ENCODE measurements at regions of chr7 and their contacts with region 1.

Region 1: GRCh38 chr7:116809636-116810266 is 52.6 kb upstream of the CAPZA2 start:
- DNase-seq: peak in 1 of 2 experiments; percentile 79
- ATAC-seq: peak; percentile 84 to 86
- H3K4me3 ChIP-seq: no peak overlapping the region
- H3K27ac ChIP-seq: peak overlapping the region; percentile 67 to 68
- H3K4me1 ChIP-seq: peaks cover 77% of the 10 kb centered on the region
- CTCF ChIP-seq: peak; percentile 92
- EP300 ChIP-seq: no peak
- POLR2A ChIP-seq: no peak
- RAD21 ChIP-seq: peak; percentile 93 to 96

Region 2: DNA sequence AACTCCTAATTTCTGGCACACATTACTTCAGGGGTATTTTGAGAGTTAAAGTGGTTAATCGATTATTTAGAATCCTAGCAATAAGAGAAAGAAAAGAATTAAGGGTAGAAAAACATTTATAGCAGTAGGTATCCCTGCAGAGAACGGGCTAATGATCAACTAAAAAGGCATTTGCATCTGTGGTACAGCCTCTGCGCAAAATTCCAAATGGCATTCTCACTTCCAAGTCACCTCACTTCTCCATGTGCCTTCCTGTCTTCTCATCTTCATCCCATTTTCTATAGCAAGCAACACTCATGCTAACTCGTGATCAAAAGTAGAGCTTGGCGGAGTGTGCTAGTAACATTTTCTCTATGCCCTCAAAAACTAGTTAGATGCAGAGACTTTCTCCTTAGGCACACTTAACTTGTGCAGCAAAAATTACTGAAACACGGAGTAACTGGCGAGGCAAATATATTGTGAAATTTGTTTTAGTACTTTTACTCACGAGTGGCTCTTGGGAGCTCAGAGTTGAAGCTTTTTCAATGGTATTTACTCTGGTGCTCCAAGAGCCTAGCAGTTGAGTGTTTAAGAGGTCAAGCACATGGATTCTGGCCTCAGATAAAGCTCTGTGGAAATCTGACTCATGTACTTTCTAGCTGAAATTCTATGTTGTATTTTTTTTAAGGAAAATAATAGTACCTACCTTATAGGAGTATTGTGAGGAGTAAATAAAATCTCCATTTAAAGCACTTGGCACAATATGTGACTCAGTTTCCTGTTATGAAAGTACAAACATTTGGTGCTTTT is 72.6 kb before region 1 on chr7:
- CTCF ChIA-PET with region 1: no interaction called
- POLR2A ChIA-PET with region 1: no interaction called
- DNase-seq: no peak
- ATAC-seq: no peak
- H3K4me3 ChIP-seq: no peak overlapping the region
- H3K27ac ChIP-seq: 0 out of 6 replicates have a peak overlapping the region, but pooled peaks of 1 of the 2 experiments have one; percentile 23
- H3K4me1 ChIP-seq: peaks cover 63% of the 10 kb centered on the region
- CTCF ChIP-seq: no peak
- EP300 ChIP-seq: no peak
- POLR2A ChIP-seq: no peak
- RAD21 ChIP-seq: no peak

Region 3: GRCh38 chr7:116828281-116828680 is 18.5 kb after region 1 on chr7:
- CTCF ChIA-PET with region 1: interaction called, 11 read pairs
- POLR2A ChIA-PET with region 1: no interaction called
- DNase-seq: no peak
- ATAC-seq: 0 out of 6 replicates have a peak, but pooled peaks of 1 of the 2 experiments have one; percentile 36
- H3K4me3 ChIP-seq: no peak overlapping the region
- H3K27ac ChIP-seq: no peak overlapping the region
- H3K4me1 ChIP-seq: no peaks in the 10 kb centered on the region
- CTCF ChIP-seq: 0 out of 3 replicates have a peak, but pooled peaks have one; percentile 10
- EP300 ChIP-seq: no peak
- POLR2A ChIP-seq: no peak
- RAD21 ChIP-seq: peak in 1 of 2 experiments; percentile 21; a peak in 2 of 5 replicates

Region 4: DNA sequence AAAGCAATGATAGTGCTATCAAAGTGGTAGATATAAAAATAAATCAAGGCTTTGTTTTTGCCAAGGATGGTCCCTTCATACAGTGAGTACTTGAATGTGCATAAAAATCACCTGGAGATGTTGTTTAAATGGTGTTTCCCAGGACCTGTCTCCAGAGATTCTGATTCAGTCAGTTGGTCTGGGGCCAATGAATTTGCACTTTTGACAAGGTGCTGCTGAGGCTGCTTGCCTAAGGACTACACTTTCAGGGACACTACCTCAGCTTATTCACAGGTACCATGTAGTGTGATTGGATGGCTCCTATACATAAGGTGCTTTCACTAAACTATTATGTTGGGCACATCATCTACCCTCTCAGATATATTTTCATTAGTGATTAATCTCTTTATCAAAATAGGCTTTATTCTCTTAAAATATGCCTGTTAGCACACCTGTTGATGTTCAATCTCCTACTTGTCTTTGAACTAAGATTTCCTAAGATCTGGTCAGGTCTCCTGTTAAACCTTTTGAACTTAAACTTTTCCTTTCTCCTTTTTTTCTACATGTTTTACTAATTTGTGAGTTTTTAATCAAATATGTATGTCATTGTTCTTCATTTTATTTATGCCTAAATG is 76.9 kb after region 1 on chr7:
- CTCF ChIA-PET with region 1: no interaction called
- POLR2A ChIA-PET with region 1: no interaction called
- DNase-seq: no peak
- ATAC-seq: no peak
- H3K4me3 ChIP-seq: no peak overlapping the region
- H3K27ac ChIP-seq: no peak overlapping the region
- H3K4me1 ChIP-seq: 0 out of 3 replicates have a peak, but pooled peaks cover 4% of the 10 kb centered on the region
- CTCF ChIP-seq: no peak
- EP300 ChIP-seq: no peak
- POLR2A ChIP-seq: no peak
- RAD21 ChIP-seq: no peak

Region 5: GRCh38 chr7:116977172-116977571 is 167.4 kb after region 1 on chr7:
- CTCF ChIA-PET with region 1: no interaction called
- POLR2A ChIA-PET with region 1: no interaction called
- DNase-seq: no peak
- ATAC-seq: no peak
- H3K4me3 ChIP-seq: no peak overlapping the region
- H3K27ac ChIP-seq: no peak overlapping the region
- H3K4me1 ChIP-seq: no peaks in the 10 kb centered on the region
- CTCF ChIP-seq: no peak
- EP300 ChIP-seq: no peak
- POLR2A ChIP-seq: no peak
- RAD21 ChIP-seq: no peak

Measured in A549 (cell line).